A673 (cell line): ENCODE measurements at regions of chr1 and their contacts with region 1.

Region 1: DNA sequence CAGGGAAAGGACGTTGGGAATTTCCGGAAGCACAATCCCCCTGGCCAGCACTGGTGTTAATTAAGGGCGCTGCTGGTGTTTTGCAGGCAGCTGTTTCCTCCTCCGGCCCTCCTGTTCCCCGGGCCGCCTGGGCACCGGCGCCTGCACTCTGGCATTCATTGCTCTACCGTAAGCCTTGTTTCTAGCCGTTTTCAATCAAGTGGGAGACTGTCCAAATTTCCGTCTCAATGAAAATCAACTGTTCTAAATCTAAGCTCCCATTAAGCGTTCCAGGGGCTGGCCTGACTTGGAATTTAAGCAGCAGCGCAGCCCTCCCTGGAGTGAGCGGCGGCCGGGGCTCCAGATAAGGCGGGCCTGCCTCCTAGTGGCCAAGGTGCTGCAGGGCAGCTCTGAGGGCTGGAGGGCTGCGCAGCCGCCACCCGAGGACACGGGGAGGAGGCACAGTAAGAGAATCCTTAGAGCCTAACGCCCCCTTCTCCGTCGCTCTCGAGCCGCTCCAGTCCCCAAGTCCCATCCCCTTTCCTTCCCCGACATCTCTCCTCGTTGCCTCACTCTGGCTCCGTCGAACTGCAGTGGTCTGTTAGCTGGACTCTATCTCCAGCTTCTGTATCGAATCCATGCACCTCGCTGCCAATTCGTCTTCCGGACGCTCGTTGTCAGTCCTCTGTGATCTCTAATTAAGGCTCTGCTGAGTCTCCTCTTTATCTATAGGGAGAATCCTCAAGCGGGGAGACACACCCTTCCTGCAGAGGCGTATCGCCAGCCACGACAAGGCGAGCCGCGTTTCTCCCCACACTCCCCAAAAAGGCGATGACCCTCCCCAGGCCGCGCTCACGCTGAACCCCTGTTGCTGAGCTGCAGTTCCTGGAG is 57.8 kb upstream of the LRRC8D start:
- DNase-seq: peak; percentile 96
- H3K4me3 ChIP-seq: peak overlapping the region; percentile 47
- H3K27ac ChIP-seq: no peak overlapping the region
- H3K4me1 ChIP-seq: peaks cover 25% of the 10 kb centered on the region
- H3K27me3 ChIP-seq: no peaks in the 10 kb centered on the region
- CTCF ChIP-seq: peak; percentile 99

Region 2: GRCh38 chr1:89483010-89483756 is 279.8 kb before region 1 on chr1:
- CTCF ChIA-PET with region 1: interaction called, 8 read pairs
- POLR2A ChIA-PET with region 1: no interaction called
- intact Hi-C with region 1: loop called (anchors 1 kb)
- DNase-seq: peak; percentile 80
- H3K4me3 ChIP-seq: no peak overlapping the region
- H3K27ac ChIP-seq: no peak overlapping the region
- H3K4me1 ChIP-seq: no peaks in the 10 kb centered on the region
- H3K27me3 ChIP-seq: no peaks in the 10 kb centered on the region
- CTCF ChIP-seq: peak; percentile 81

Region 3: DNA sequence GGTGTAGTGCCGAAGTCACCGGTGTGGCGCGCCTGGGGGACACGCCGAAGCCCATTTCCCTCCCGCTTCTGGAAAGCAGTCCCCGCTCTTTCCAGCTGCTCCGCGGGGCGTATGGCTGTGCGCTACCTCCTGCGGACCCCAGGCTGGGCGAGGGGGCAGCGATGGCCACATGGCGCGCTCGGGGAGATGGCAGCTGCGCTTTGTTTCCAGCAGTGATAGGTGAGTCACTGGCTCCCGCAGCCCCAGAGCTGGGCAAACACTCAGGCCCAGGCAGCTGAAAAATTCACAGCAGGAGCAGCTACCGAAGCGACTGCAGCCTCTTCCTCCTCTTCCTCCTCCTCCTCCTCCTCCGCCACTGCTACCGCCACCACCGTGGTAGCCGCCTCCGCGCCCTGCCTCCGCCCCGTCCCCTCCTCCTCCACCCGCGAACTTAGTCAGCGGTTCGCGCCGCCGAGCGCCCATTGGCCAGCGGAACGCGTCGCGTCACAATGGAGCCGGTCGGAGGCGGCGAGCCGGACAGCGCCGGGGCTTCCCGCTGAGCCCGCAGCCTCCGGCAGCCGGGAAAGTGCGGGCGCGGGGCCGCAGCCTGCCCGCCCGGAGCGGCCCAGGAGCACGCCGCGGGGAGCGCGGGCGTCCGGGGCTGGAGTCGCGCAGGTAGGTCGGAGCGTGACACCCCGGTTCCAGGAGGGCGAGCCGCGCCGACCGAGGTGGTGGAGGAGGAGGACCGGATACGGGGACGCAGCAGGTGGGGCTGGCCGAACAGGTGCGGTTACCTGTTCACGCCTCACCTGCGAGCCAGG is 238.4 kb before region 1 on chr1 and contains the start of gene LRRC8B:
- CTCF ChIA-PET with region 1: no interaction called
- POLR2A ChIA-PET with region 1: no interaction called
- intact Hi-C with region 1: loop called (anchors 5 kb)
- DNase-seq: peak; percentile 92
- H3K4me3 ChIP-seq: peak within 1 kb of the TSS; percentile 91
- H3K27ac ChIP-seq: peak within 1 kb of the TSS; percentile 84
- H3K4me1 ChIP-seq: peaks cover 35% of the 10 kb centered on the region
- H3K27me3 ChIP-seq: no peaks in the 10 kb centered on the region
- CTCF ChIP-seq: no peak
- total RNA-seq, gene LRRC8B: 18.9 and 20.0 TPM in 2 replicates

Region 4: DNA sequence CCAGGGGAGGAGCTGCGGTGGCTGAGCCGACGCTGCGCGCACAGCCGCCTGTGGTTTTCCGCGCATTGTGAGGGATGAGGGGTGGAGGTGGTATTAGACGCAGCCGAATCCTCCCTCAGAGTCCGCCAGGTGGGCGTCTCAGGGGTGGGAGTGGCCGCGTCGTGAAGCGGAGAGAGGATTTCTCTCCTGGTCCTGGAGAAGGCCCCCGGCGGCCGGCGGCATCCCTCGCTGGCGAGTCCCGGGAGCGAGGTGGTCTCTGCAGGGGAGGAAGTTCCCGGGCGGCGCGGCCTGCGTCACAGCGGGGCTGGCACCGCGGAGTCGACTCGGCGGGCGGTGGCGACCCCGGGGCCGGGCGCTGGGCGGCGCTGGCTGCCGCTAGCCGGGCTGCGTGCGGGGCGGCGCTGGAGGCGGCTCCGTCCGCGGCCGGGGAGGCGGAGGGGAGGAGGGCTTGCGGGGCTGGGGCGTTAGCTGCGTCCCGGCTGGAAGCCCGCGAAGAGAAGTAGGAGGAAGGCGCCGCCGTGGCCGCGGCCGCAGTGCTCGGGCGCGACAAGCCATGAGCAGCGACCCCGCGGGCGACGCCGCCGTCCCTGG is 130.3 kb before region 1 on chr1 and contains the start of gene LRRC8C:
- CTCF ChIA-PET with region 1: interaction called, 8 read pairs
- POLR2A ChIA-PET with region 1: interaction called, 18 read pairs
- intact Hi-C with region 1: loop called (anchors 1 kb)
- DNase-seq: peak; percentile 89
- H3K4me3 ChIP-seq: peak within 1 kb of the TSS; percentile 94
- H3K27ac ChIP-seq: peak within 1 kb of the TSS; percentile 79
- H3K4me1 ChIP-seq: peaks cover 8% of the 10 kb centered on the region
- H3K27me3 ChIP-seq: no peaks in the 10 kb centered on the region
- CTCF ChIP-seq: no peak; the same call in 1 of the 2 replicates
- total RNA-seq, gene LRRC8C: 5.6 and 6.9 TPM in 2 replicates